Activated B cell treated with CpG ODN at 0.5 μM for 24 hours (primary cell): ENCODE measurements at regions of chr22 and their contacts with region 1.

Region 1: DNA sequence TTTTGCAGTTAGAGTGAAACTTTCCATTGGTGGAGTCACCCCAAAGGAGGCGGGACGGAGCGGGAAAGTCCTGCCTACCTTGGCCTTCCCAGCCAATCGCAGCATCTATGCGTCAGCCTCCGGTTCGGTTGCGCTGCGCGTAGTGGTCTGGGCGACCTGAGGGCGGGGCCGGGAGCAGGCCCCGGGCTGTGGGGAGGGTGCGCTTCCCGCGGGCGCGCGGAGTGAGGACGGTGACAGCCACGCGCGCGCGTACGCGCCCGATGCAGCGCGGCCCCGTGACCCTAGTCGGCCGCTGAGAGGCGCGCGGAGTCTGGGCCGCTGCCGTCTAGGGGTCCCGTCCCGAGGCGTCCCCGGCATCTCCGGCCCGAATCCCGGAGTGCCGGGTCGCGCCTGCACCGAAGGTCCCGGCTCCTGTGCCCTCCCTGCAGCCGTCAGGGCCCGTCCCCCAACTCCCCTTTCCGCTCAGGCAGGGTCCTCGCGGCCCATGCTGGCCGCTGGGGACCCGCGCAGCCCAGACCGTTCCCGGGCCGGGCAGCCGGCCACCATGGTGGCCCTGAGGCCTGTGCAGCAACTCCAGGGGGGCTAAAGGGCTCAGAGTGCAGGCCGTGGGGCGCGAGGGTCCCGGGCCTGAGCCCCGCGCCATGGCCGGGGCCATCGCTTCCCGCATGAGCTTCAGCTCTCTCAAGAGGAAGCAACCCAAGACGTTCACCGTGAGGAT is at the start of gene NF2:
- DNase-seq: peak; percentile 94
- ATAC-seq: peak; percentile 97
- H3K4me3 Mint-ChIP-seq: peak within 1 kb of the TSS; percentile 93
- H3K27ac Mint-ChIP-seq: peak within 1 kb of the TSS; percentile 95
- H3K4me1 Mint-ChIP-seq: peaks cover 24% of the 10 kb centered on the region
- H3K27me3 Mint-ChIP-seq: no peaks in the 10 kb centered on the region
- CTCF ChIP-seq: no peak
- total RNA-seq, gene NF2: 30.3 and 32.3 TPM in 2 replicates

Region 2: GRCh38 chr22:29553351-29554224 is 49.9 kb before region 1 on chr22 and contains the start of gene THOC5:
- CTCF ChIA-PET with region 1: no interaction called
- POLR2A ChIA-PET with region 1: interaction called, 10 read pairs
- intact Hi-C with region 1: loop called (anchors 1 kb)
- DNase-seq: peak; percentile 84
- ATAC-seq: peak; percentile 96
- H3K4me3 Mint-ChIP-seq: peak within 1 kb of the TSS; percentile 96
- H3K27ac Mint-ChIP-seq: peak within 1 kb of the TSS; percentile 98
- H3K4me1 Mint-ChIP-seq: peaks cover 16% of the 10 kb centered on the region
- H3K27me3 Mint-ChIP-seq: no peaks in the 10 kb centered on the region
- CTCF ChIP-seq: no peak
- total RNA-seq, gene THOC5: 44.1 and 51.3 TPM in 2 replicates

Region 3: GRCh38 chr22:29587938-29588699 is 15.4 kb before region 1 on chr22:
- CTCF ChIA-PET with region 1: interaction called, 4 read pairs
- POLR2A ChIA-PET with region 1: interaction called, 4 read pairs
- intact Hi-C with region 1: loop called (anchors 1 kb)
- DNase-seq: no peak
- ATAC-seq: no peak
- H3K4me3 Mint-ChIP-seq: no peak overlapping the region
- H3K27ac Mint-ChIP-seq: no peak overlapping the region
- H3K4me1 Mint-ChIP-seq: peaks cover 6% of the 10 kb centered on the region
- H3K27me3 Mint-ChIP-seq: no peaks in the 10 kb centered on the region
- CTCF ChIP-seq: no peak

Region 4: DNA sequence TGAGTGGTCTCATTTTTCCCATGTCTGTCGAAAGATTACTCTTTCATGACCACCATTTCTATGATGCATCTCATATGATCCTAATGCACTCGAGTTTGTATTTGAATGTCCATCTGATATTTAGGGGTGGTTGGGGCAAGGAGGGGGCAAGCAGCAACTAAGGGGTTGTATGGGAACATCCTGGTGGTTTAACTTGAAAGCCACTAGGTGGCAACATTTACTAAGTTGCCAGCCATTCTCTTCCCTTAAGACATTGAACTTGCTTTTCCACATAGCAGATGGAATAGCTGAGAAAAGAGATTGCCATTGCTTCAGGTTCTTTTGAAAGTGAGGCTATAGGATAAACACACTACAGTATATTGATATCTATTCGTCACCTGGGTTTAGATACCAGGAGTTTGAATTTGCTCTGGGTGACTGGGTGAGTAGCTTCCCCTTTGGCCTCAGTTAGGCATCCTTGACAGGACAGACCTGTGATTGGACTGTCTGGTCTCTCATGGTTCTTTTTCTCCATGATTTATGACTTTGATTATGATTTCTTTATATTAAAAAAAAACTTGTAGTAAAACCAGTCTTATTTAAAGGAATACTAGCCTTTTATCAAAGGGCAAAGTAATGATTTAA is 32.3 kb after region 1 on chr22:
- CTCF ChIA-PET with region 1: no interaction called
- POLR2A ChIA-PET with region 1: no interaction called
- intact Hi-C with region 1: no loop called
- DNase-seq: no peak
- ATAC-seq: no peak
- H3K4me3 Mint-ChIP-seq: no peak overlapping the region
- H3K27ac Mint-ChIP-seq: no peak overlapping the region
- H3K4me1 Mint-ChIP-seq: peaks cover 8% of the 10 kb centered on the region
- H3K27me3 Mint-ChIP-seq: no peaks in the 10 kb centered on the region
- CTCF ChIP-seq: no peak

Region 5: GRCh38 chr22:29766632-29767170 is 163.2 kb after region 1 on chr22 and contains the start of gene ZMAT5:
- CTCF ChIA-PET with region 1: no interaction called
- POLR2A ChIA-PET with region 1: no interaction called
- intact Hi-C with region 1: loop called (anchors 1 kb)
- DNase-seq: peak; percentile 76
- ATAC-seq: peak; percentile 96
- H3K4me3 Mint-ChIP-seq: peak within 1 kb of the TSS; percentile 97
- H3K27ac Mint-ChIP-seq: peak within 1 kb of the TSS; percentile 93
- H3K4me1 Mint-ChIP-seq: peaks cover 32% of the 10 kb centered on the region
- H3K27me3 Mint-ChIP-seq: no peaks in the 10 kb centered on the region
- CTCF ChIP-seq: no peak
- total RNA-seq, gene ZMAT5: 19.2 and 22.6 TPM in 2 replicates

Region 6: GRCh38 chr22:29883045-29883774 is 279.7 kb after region 1 on chr22 and contains the start of gene MTMR3:
- CTCF ChIA-PET with region 1: no interaction called
- POLR2A ChIA-PET with region 1: no interaction called
- intact Hi-C with region 1: loop called (anchors 1 kb)
- DNase-seq: peak; percentile 98
- ATAC-seq: peak; percentile 82
- H3K4me3 Mint-ChIP-seq: peak within 1 kb of the TSS; percentile 92
- H3K27ac Mint-ChIP-seq: peak within 1 kb of the TSS; percentile 83
- H3K4me1 Mint-ChIP-seq: peaks cover 10% of the 10 kb centered on the region
- H3K27me3 Mint-ChIP-seq: peaks cover 3% of the 10 kb centered on the region
- CTCF ChIP-seq: no peak
- total RNA-seq, gene MTMR3: 34.8 and 36.6 TPM in 2 replicates

Region 7: GRCh38 chr22:29994027-29994715 is 390.7 kb after region 1 on chr22:
- CTCF ChIA-PET with region 1: no interaction called
- POLR2A ChIA-PET with region 1: no interaction called
- intact Hi-C with region 1: no loop called
- DNase-seq: no peak
- ATAC-seq: no peak
- H3K4me3 Mint-ChIP-seq: no peak overlapping the region
- H3K27ac Mint-ChIP-seq: no peak overlapping the region
- H3K4me1 Mint-ChIP-seq: no peaks in the 10 kb centered on the region
- H3K27me3 Mint-ChIP-seq: no peaks in the 10 kb centered on the region
- CTCF ChIP-seq: no peak

Region 8: GRCh38 chr22:31345331-31346254 is 1742.1 kb after region 1 on chr22:
- CTCF ChIA-PET with region 1: no interaction called
- POLR2A ChIA-PET with region 1: no interaction called
- intact Hi-C with region 1: loop called (anchors 10 kb)
- DNase-seq: peak; percentile 89
- ATAC-seq: peak; percentile 58
- H3K4me3 Mint-ChIP-seq: peak overlapping the region; percentile 83
- H3K27ac Mint-ChIP-seq: peak overlapping the region; percentile 80
- H3K4me1 Mint-ChIP-seq: peaks cover 50% of the 10 kb centered on the region
- H3K27me3 Mint-ChIP-seq: no peaks in the 10 kb centered on the region
- CTCF ChIP-seq: peak; percentile 56